Astrocyte of the cerebellum (primary cell): ENCODE measurements at regions of chr6 and their contacts with region 1.

Region 1: GRCh38 chr6:18845891-18846290 is 458.7 kb downstream of the RNF144B start:
- DNase-seq: no peak
- H3K4me3 ChIP-seq: no peak overlapping the region
- CTCF ChIP-seq: no peak

Region 2: DNA sequence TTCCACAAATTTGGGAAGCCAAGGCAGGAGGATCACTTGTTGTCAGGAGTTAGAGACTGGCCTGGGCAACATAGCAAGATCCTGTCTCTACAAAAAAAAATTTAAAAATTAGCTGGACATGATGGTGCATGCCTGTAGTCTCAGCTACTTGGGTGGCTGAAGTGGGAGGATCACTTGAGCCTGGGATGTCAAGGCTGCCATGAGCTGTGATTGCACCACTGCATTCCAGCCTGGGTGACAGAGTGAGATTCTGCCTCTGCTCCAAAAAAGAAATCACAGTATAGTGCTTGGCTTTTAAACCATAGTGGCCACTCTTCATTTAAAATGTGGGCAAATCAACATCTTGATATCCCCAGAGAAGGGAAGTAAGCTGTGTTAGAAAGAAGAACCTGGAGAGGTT is 29.8 kb before region 1 on chr6:
- in situ Hi-C with region 1: loop called (anchors 5 kb)
- DNase-seq: no peak
- H3K4me3 ChIP-seq: no peak overlapping the region
- CTCF ChIP-seq: no peak